ENCODE measurements at regions of chr11 and their contacts with region 1.

Region 1: DNA sequence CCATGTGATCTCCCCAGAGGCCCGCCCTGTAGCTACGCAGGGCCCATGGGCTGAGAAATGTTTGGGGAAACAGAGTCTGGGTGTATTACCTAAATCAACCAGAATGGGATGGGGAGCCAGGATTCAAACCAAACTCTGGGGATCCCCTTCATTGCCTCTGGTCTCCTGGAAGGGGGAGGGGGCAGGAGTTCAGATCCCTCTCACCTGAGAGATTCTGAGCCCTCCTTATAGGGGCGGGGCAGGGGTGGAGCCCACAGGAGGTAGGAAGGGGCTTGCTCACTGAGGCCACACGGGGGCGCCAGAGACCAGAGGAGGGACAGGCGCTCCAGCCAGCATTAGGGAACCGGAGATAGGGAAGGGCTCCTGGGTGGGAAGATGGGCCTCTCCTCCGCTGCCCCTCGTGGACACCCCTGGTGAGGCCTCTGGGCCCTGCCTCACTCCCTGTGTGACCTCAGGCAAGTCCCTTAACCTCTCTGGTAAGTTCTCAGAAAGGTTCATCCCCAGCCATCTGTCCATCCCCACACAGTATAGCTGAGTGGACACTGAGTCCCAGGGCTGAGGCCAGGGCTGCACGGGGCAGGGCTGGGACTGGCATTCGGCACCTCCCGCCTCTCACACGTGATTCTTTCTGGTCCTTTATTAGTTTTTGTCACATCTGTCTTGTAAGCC is 2.7 kb upstream of the CDC42BPG start:
- DNase-seq: peak; percentile 84 to 90 (median 88)
- H3K4me3 ChIP-seq: no peak overlapping the region
- H3K4me3 Mint-ChIP-seq: peak overlapping the region in 4 of 8 donors; percentile 20 to 62 (median 34)
- H3K27ac ChIP-seq: peak overlapping the region; percentile 23
- H3K27ac Mint-ChIP-seq: peak overlapping the region; percentile 11 to 89 (median 82)
- H3K4me1 ChIP-seq: peaks cover 65% of the 10 kb centered on the region
- H3K4me1 Mint-ChIP-seq: peaks cover 35 to 64% (median 49%) of the 10 kb centered on the region in 4 donors
- H3K27me3 ChIP-seq: no peaks in the 10 kb centered on the region
- H3K27me3 Mint-ChIP-seq: no peaks in the 10 kb centered on the region

Region 2: GRCh38 chr11:64583296-64584232 is 263.6 kb before region 1 on chr11:
- CTCF ChIA-PET with region 1: no interaction called
- POLR2A ChIA-PET with region 1: no interaction called
- intact Hi-C with region 1: no loop called
- DNase-seq: no peak
- H3K4me3 ChIP-seq: no peak overlapping the region
- H3K4me3 Mint-ChIP-seq: no peak overlapping the region
- H3K27ac ChIP-seq: no peak overlapping the region
- H3K27ac Mint-ChIP-seq: no peak overlapping the region
- H3K4me1 ChIP-seq: no peaks in the 10 kb centered on the region
- H3K4me1 Mint-ChIP-seq: no peaks in the 10 kb centered on the region
- H3K27me3 ChIP-seq: no peaks in the 10 kb centered on the region
- H3K27me3 Mint-ChIP-seq: peaks cover 15 to 26% of the 10 kb centered on the region in 2 donors

Region 3: DNA sequence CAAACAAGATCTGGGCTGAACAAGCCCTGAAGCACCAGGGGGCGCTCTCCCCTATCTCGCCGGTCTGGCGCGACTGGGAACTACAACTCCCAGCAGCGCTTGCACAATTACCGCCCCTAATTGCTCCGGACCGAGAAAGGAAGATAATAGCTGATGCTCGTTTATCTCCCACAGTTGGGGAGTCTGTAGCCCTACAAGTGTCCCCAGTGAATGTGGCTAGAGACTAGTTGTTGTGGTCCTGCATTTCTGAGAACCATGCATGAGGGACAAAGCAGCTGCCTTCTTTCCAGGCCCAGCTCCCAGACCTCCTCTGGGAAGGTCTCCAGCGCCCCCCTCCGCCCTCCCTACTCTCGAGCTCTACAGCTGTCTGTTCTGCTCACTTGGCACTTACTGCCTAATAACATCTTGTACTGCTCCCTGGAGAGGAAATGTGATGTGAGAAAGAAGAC is 158.6 kb before region 1 on chr11:
- CTCF ChIA-PET with region 1: interaction called, 7 read pairs
- POLR2A ChIA-PET with region 1: no interaction called
- intact Hi-C with region 1: loop called (anchors 2 kb)
- DNase-seq: peak; percentile 83 to 87 (median 86)
- H3K4me3 ChIP-seq: peak overlapping the region in 1 of 2 donors; percentile 26
- H3K4me3 Mint-ChIP-seq: peak overlapping the region; percentile 40 to 80 (median 54)
- H3K27ac ChIP-seq: no peak overlapping the region
- H3K27ac Mint-ChIP-seq: peak overlapping the region in 6 of 7 donors; percentile 49 to 85 (median 69)
- H3K4me1 ChIP-seq: peaks cover 11% of the 10 kb centered on the region
- H3K4me1 Mint-ChIP-seq: peaks cover 7 to 19% (median 13%) of the 10 kb centered on the region in 4 donors
- H3K27me3 ChIP-seq: peaks cover 4% of the 10 kb centered on the region
- H3K27me3 Mint-ChIP-seq: peaks cover 15 to 23% of the 10 kb centered on the region in 2 donors

Region 4: DNA sequence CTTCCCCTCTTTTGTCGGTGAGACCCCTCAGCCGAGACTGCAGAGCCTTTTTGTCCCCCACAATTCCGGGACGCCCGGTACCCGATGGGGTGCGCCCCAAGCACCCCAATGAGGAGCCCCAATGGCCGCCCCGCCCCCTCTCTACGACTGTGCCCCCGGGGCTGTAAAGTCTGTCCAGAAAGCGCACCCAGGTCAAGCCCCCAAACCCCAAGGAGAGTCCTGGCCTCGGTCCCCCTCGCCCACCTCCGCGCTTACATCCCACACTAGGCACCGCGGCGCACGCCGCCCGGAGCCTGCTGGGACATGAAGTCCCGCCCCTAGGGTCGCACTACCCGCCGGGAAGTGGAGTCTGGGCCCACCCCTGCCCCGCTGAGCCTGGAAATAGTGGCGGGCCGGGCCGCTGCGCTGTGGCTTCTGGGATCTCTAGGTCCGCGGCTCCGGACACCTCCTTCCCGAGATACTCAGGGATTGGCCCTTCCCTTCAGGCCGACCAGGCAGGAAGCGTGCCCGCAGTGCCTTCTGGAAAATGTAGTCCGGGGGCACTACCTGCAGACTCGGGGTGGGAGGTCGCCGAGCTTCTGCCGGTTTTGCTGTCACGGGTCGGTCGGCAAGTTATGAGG is 36.8 kb before region 1 on chr11 and contains the start of gene MEN1:
- CTCF ChIA-PET with region 1: interaction called, 5 read pairs
- POLR2A ChIA-PET with region 1: interaction called, 7 read pairs
- intact Hi-C with region 1: loop called (anchors 2 kb)
- DNase-seq: peak; percentile 76 to 86 (median 80)
- H3K4me3 ChIP-seq: peak within 1 kb of the TSS; percentile 73 to 96
- H3K4me3 Mint-ChIP-seq: peak within 1 kb of the TSS; percentile 92 to 99 (median 95)
- H3K27ac ChIP-seq: peak within 1 kb of the TSS; percentile 79
- H3K27ac Mint-ChIP-seq: peak within 1 kb of the TSS; percentile 78 to 97 (median 95)
- H3K4me1 ChIP-seq: peaks cover 12% of the 10 kb centered on the region
- H3K4me1 Mint-ChIP-seq: peaks cover 9 to 31% (median 19%) of the 10 kb centered on the region in 4 donors
- H3K27me3 ChIP-seq: no peaks in the 10 kb centered on the region
- H3K27me3 Mint-ChIP-seq: no peaks in the 10 kb centered on the region
- total RNA-seq, gene MEN1: 41.3 to 42.7 TPM

Region 5: GRCh38 chr11:64878494-64879243 is 31.5 kb after region 1 on chr11 and contains the start of gene EHD1:
- CTCF ChIA-PET with region 1: interaction called, 1,245 read pairs
- POLR2A ChIA-PET with region 1: interaction called, 2,105 read pairs
- intact Hi-C with region 1: loop called (anchors 1 kb)
- DNase-seq: peak; percentile 99 to 100 (median 99)
- H3K4me3 ChIP-seq: peak within 1 kb of the TSS; percentile 82 to 99
- H3K4me3 Mint-ChIP-seq: peak within 1 kb of the TSS; percentile 99 to 100 (median 99)
- H3K27ac ChIP-seq: peak within 1 kb of the TSS; percentile 92
- H3K27ac Mint-ChIP-seq: peak within 1 kb of the TSS; percentile 96 to 98 (median 97)
- H3K4me1 ChIP-seq: peaks cover 58% of the 10 kb centered on the region
- H3K4me1 Mint-ChIP-seq: peaks cover 34 to 77% (median 47%) of the 10 kb centered on the region in 4 donors
- H3K27me3 ChIP-seq: no peaks in the 10 kb centered on the region
- H3K27me3 Mint-ChIP-seq: no peaks in the 10 kb centered on the region
- total RNA-seq, gene EHD1: 268 to 279 TPM

Region 6: GRCh38 chr11:64894070-64894796 is 47.1 kb after region 1 on chr11:
- CTCF ChIA-PET with region 1: interaction called, 1,245 read pairs
- POLR2A ChIA-PET with region 1: interaction called, 2,105 read pairs
- intact Hi-C with region 1: loop called (anchors 1 kb)
- DNase-seq: peak; percentile 82 to 87 (median 84)
- H3K4me3 ChIP-seq: no peak overlapping the region
- H3K4me3 Mint-ChIP-seq: no peak overlapping the region
- H3K27ac ChIP-seq: no peak overlapping the region
- H3K27ac Mint-ChIP-seq: peak overlapping the region in 3 of 7 donors; percentile 64 to 76 (median 74)
- H3K4me1 ChIP-seq: peaks cover 4% of the 10 kb centered on the region
- H3K4me1 Mint-ChIP-seq: peaks cover 2 to 12% (median 2%) of the 10 kb centered on the region in 4 donors
- H3K27me3 ChIP-seq: no peaks in the 10 kb centered on the region
- H3K27me3 Mint-ChIP-seq: no peaks in the 10 kb centered on the region

Region 7: GRCh38 chr11:65078151-65078550 is 231.0 kb after region 1 on chr11:
- CTCF ChIA-PET with region 1: interaction called, 6 read pairs
- POLR2A ChIA-PET with region 1: no interaction called
- intact Hi-C with region 1: loop called (anchors 5 kb)
- DNase-seq: peak; percentile 71 to 75 (median 72)
- H3K4me3 ChIP-seq: no peak overlapping the region
- H3K4me3 Mint-ChIP-seq: peak overlapping the region in 2 of 8 donors; percentile 9 to 30
- H3K27ac ChIP-seq: peak overlapping the region; percentile 35
- H3K27ac Mint-ChIP-seq: peak overlapping the region; percentile 42 to 93 (median 81)
- H3K4me1 ChIP-seq: peaks cover 18% of the 10 kb centered on the region
- H3K4me1 Mint-ChIP-seq: peaks cover 4 to 22% (median 12%) of the 10 kb centered on the region in 4 donors
- H3K27me3 ChIP-seq: no peaks in the 10 kb centered on the region
- H3K27me3 Mint-ChIP-seq: no peaks in the 10 kb centered on the region

Measured in CD4-positive, alpha-beta memory T cell (primary cell).